Endothelial cell of umbilical vein (primary cell): ENCODE measurements at regions of chr2 and their contacts with region 1.

Region 1: GRCh38 chr2:182132605-182133004 is 147.0 kb downstream of the PPP1R1C start:
- DNase-seq: peak; percentile 65
- H3K4me3 ChIP-seq: no peak overlapping the region
- H3K27ac ChIP-seq: peak overlapping the region; percentile 83
- H3K4me1 ChIP-seq: peaks cover 29% of the 10 kb centered on the region
- H3K27me3 ChIP-seq: no peaks in the 10 kb centered on the region
- CTCF ChIP-seq: peak in 1 of 2 donors; percentile 25
- POLR2A ChIP-seq: no peak

Region 2: DNA sequence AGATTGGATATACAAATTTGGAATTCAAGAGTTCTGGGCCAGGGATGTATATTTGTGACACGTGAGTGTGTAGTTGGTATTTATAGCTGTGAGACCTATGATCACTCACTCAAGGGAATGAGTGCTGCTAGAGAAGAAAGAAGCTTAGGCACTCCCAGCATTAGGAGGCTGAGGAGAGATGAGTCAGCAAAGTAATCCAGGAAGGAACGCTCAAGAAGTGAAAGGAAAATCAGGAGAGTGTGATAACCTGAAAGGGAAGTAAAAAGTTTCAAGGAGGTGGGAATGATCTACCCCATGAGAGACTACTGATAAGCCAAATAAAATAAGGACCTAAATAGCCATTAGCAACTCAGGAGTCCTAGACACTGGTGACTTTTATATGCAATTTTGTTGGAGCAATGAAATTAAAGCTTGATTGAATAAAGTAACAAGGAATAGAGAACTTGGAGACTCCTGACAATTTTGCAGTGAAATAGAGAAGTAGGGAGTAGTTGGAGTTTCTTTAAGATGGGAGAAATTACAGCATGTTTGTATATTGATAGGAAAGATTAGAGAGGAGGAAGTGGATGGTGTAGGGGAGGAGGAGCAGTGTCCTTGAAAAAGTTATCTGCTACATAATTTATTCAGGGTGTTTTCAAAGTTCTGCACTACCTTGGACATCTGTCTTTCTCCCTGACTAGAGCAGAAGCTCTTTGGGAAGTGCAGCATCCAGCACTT is 1062.3 kb before region 1 on chr2:
- CTCF ChIA-PET with region 1: no interaction called
- POLR2A ChIA-PET with region 1: no interaction called
- dilution Hi-C with region 1: no loop called
- intact Hi-C with region 1: loop called (anchors 5 kb)
- DNase-seq: peak; percentile 73
- H3K4me3 ChIP-seq: no peak overlapping the region
- H3K27ac ChIP-seq: no peak overlapping the region
- H3K4me1 ChIP-seq: peaks cover 47% of the 10 kb centered on the region
- H3K27me3 ChIP-seq: no peaks in the 10 kb centered on the region
- CTCF ChIP-seq: no peak
- POLR2A ChIP-seq: no peak

Region 3: GRCh38 chr2:181457121-181457740 is 675.4 kb before region 1 on chr2 and contains the start of gene ITGA4:
- CTCF ChIA-PET with region 1: no interaction called
- POLR2A ChIA-PET with region 1: no interaction called
- dilution Hi-C with region 1: no loop called
- intact Hi-C with region 1: loop called (anchors 5 kb)
- DNase-seq: peak; percentile 47
- H3K4me3 ChIP-seq: peak within 1 kb of the TSS; percentile 5 to 43 (median 41)
- H3K27ac ChIP-seq: no peak within 1 kb of the TSS
- H3K4me1 ChIP-seq: peaks cover 7% of the 10 kb centered on the region
- H3K27me3 ChIP-seq: peaks cover 15 to 53% of the 10 kb centered on the region in 2 experiments
- CTCF ChIP-seq: peak; percentile 65 to 76
- POLR2A ChIP-seq: no peak
- total RNA-seq, gene ITGA4: 2.8 TPM in 2 replicates

Region 4: GRCh38 chr2:181573140-181573736 is 559.4 kb before region 1 on chr2:
- CTCF ChIA-PET with region 1: interaction called, 14 read pairs
- POLR2A ChIA-PET with region 1: no interaction called
- dilution Hi-C with region 1: no loop called
- intact Hi-C with region 1: loop called (anchors 1 kb)
- DNase-seq: peak; percentile 38
- H3K4me3 ChIP-seq: no peak overlapping the region
- H3K27ac ChIP-seq: no peak overlapping the region
- H3K4me1 ChIP-seq: no peaks in the 10 kb centered on the region
- H3K27me3 ChIP-seq: peaks cover 4 to 12% of the 10 kb centered on the region in 2 experiments
- CTCF ChIP-seq: peak; percentile 18 to 31
- POLR2A ChIP-seq: no peak

Region 5: DNA sequence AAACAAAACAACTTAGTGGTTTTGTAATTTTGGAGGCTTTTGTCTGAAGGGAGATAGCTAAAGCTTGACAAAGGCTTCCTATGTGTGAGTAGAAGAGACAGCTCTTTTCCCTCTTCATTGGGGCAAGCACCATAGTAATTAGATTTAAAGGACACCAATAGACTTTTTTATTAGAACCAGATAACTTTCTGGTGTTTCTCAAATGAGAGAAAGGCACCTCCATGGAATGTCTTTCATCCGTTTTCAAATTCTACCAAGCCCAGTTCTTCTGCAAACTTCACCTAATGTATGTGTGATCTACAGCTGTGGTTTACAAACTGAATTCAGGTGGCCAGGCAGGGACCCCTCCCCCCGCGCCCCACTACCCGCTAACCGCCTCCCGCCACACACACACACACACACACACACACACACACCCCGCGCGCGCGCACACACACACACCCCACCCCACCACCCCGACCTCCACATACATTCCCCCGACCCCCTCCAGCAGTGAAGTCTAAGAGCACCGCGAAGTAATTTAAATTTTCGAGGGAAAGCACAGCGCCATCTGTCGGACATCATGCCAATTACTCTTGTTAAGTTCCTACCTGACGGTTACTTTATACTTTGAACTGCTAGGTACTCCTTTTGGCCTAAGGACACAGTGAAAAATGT is 178.6 kb before region 1 on chr2:
- CTCF ChIA-PET with region 1: interaction called, 3 read pairs
- POLR2A ChIA-PET with region 1: no interaction called
- dilution Hi-C with region 1: no loop called
- intact Hi-C with region 1: loop called (anchors 2 kb)
- DNase-seq: peak; percentile 81
- H3K4me3 ChIP-seq: peak overlapping the region; percentile 33 to 42 (median 39)
- H3K27ac ChIP-seq: peak overlapping the region; percentile 74
- H3K4me1 ChIP-seq: peaks cover 29% of the 10 kb centered on the region
- H3K27me3 ChIP-seq: no peaks in the 10 kb centered on the region
- CTCF ChIP-seq: peak; percentile 47 to 63
- POLR2A ChIP-seq: no peak

Region 6: GRCh38 chr2:182077451-182078142 is 55.0 kb before region 1 on chr2:
- CTCF ChIA-PET with region 1: interaction called, 15 read pairs
- POLR2A ChIA-PET with region 1: no interaction called
- dilution Hi-C with region 1: no loop called
- intact Hi-C with region 1: no loop called
- DNase-seq: peak; percentile 84
- H3K4me3 ChIP-seq: no peak overlapping the region
- H3K27ac ChIP-seq: no peak overlapping the region
- H3K4me1 ChIP-seq: peaks cover 3% of the 10 kb centered on the region
- H3K27me3 ChIP-seq: no peaks in the 10 kb centered on the region
- CTCF ChIP-seq: peak; percentile 40 to 45
- POLR2A ChIP-seq: no peak

Region 7: GRCh38 chr2:182186132-182186735 is 53.6 kb after region 1 on chr2:
- CTCF ChIA-PET with region 1: interaction called, 3 read pairs
- POLR2A ChIA-PET with region 1: no interaction called
- dilution Hi-C with region 1: no loop called
- intact Hi-C with region 1: loop called (anchors 2 kb)
- DNase-seq: peak; percentile 67
- H3K4me3 ChIP-seq: no peak overlapping the region
- H3K27ac ChIP-seq: no peak overlapping the region
- H3K4me1 ChIP-seq: no peaks in the 10 kb centered on the region
- H3K27me3 ChIP-seq: no peaks in the 10 kb centered on the region
- CTCF ChIP-seq: peak; percentile 25 to 32
- POLR2A ChIP-seq: no peak